Activated CD8-positive, alpha-beta T cell treated with anti-CD3 and anti-CD28 coated beads, Interleukin-2, amount 10 ng/mL, durations not matched to agents 7 days and 5 days (primary cell): ENCODE measurements at regions of chr12 and their contacts with region 1.

Region 1: GRCh38 chr12:55738123-55739024 is 4.5 kb upstream of the GDF11 start:
- DNase-seq: peak; percentile 90
- ATAC-seq: peak; percentile 73
- H3K4me3 Mint-ChIP-seq: peak overlapping the region; percentile 82
- H3K27ac Mint-ChIP-seq: peak overlapping the region; percentile 86
- H3K4me1 Mint-ChIP-seq: peaks cover 43% of the 10 kb centered on the region
- H3K27me3 Mint-ChIP-seq: peaks cover 7% of the 10 kb centered on the region

Region 2: DNA sequence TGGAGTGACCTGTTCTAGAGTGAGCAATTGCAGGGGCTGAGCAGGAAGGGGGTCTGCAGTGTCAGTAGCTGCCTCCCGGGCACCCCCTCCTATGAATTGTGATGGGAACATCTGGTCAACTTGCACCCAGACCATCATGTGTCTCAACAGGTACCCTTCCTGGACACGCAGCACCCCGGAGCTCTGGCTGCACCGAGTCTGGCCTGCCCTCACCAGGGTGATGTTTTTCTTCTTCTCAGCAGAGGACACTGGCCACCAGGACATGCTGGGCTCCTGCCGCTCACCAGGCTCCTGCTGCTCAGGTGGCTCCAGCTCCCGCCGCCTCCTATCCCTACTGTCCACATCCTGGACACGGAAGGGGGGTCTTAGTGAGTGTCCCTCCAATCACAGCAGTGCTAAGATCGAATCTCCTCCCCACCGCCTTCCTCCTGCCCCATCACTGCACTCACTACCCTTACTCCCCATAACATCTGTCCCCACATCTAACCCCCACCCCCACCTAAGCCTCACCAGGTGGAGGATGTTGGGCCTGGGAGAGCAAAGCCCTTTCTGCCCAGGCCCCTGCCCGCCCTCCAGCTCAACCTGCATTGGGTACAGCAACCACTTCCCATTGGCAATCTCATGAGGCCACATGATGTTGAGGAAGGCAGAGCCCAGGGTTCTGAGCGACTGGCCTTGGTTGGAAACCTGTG is 45.6 kb before region 1 on chr12:
- CTCF ChIA-PET with region 1: no interaction called
- POLR2A ChIA-PET with region 1: no interaction called
- DNase-seq: no peak
- ATAC-seq: no peak
- H3K4me3 Mint-ChIP-seq: no peak overlapping the region
- H3K27ac Mint-ChIP-seq: no peak overlapping the region
- H3K4me1 Mint-ChIP-seq: peaks cover 1% of the 10 kb centered on the region
- H3K27me3 Mint-ChIP-seq: no peaks in the 10 kb centered on the region

Region 3: GRCh38 chr12:55705782-55706402 is 32.5 kb before region 1 on chr12:
- CTCF ChIA-PET with region 1: no interaction called
- POLR2A ChIA-PET with region 1: no interaction called
- DNase-seq: no peak
- ATAC-seq: no peak
- H3K4me3 Mint-ChIP-seq: no peak overlapping the region
- H3K27ac Mint-ChIP-seq: no peak overlapping the region
- H3K4me1 Mint-ChIP-seq: peaks cover 20% of the 10 kb centered on the region
- H3K27me3 Mint-ChIP-seq: peaks cover 39% of the 10 kb centered on the region

Region 4: GRCh38 chr12:55771736-55772135 is 33.4 kb after region 1 on chr12:
- CTCF ChIA-PET with region 1: interaction called, 15 read pairs
- POLR2A ChIA-PET with region 1: no interaction called
- DNase-seq: no peak
- ATAC-seq: no peak
- H3K4me3 Mint-ChIP-seq: no peak overlapping the region
- H3K27ac Mint-ChIP-seq: no peak overlapping the region
- H3K4me1 Mint-ChIP-seq: peaks cover 3% of the 10 kb centered on the region
- H3K27me3 Mint-ChIP-seq: no peaks in the 10 kb centered on the region

Region 5: DNA sequence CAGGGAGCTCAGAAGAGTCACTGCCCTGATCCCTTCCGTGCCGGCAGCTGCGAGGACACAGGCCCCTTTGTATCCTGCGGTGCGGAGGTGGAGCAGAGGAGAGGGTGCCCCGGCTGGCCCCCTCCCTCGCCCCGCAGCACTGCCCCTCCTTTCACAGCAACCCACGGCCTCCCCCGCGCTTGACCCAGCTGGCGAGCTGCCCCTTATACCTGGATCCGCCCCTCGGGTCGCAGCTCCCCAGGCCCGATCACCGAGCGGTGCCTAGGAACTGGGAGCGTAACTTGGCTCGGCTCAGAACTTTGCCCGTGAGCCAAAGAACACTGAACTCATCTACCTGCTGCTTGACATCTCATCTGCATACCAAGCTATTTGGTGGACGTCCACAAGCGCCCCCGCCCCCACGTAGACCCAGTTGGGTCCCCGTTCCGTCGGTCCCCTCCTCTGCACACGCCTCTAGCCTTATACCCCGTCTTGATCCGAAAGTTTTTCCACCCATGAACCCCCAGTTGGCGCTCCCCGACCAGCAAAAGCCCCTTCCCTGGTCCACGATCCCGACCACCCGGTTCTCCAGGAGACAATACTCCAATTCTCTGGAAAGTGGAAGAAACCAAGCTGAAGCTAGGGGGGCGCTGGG is 91.7 kb after region 1 on chr12:
- CTCF ChIA-PET with region 1: interaction called, 16 read pairs
- POLR2A ChIA-PET with region 1: interaction called, 4 read pairs
- DNase-seq: peak; percentile 55
- ATAC-seq: peak; percentile 35
- H3K4me3 Mint-ChIP-seq: peak overlapping the region; percentile 99
- H3K27ac Mint-ChIP-seq: peak overlapping the region; percentile 97
- H3K4me1 Mint-ChIP-seq: peaks cover 41% of the 10 kb centered on the region
- H3K27me3 Mint-ChIP-seq: no peaks in the 10 kb centered on the region

Region 6: DNA sequence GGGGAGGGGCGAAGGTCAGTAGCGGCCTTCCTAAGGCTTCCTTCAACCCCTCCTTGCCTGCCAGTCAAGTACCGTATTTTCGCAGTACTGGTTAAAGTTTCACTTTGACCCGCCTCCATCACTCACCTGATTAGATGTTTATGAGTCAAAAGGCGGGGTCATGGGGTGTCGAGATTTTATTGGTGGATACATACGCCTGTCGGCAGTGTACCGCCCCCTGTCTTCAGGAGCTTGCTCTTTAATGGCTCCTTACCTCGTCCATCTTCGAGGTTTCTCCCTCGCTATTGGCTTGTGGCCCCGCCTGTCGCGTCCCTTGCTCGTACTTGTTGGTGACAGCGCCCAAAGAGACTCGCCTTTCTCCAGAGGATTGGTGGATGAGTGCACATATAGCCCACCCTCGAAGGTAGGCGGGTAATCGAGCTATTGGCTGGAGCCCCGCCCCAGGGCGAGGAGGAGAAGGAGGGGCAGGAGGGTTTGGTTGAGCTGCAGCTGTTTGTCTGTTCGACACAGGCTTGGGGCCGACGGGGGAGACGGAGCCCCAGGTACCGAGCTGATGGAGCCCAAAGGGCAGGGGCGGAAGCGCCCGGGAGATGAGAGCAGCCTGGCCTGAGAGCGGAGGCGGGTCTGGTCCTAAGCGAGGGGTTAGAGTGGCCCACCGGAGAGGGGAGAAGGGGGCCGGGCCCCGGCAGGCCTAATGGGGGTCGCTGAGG is 235.4 kb after region 1 on chr12 and contains the start of gene RAB5B:
- CTCF ChIA-PET with region 1: interaction called, 21 read pairs
- POLR2A ChIA-PET with region 1: no interaction called
- DNase-seq: peak; percentile 100
- ATAC-seq: peak; percentile 96
- H3K4me3 Mint-ChIP-seq: no peak within 1 kb of the TSS
- H3K27ac Mint-ChIP-seq: no peak within 1 kb of the TSS
- H3K4me1 Mint-ChIP-seq: peaks cover 17% of the 10 kb centered on the region
- H3K27me3 Mint-ChIP-seq: no peaks in the 10 kb centered on the region
- total RNA-seq, gene RAB5B: 51.9 to 52.9 TPM

Region 7: DNA sequence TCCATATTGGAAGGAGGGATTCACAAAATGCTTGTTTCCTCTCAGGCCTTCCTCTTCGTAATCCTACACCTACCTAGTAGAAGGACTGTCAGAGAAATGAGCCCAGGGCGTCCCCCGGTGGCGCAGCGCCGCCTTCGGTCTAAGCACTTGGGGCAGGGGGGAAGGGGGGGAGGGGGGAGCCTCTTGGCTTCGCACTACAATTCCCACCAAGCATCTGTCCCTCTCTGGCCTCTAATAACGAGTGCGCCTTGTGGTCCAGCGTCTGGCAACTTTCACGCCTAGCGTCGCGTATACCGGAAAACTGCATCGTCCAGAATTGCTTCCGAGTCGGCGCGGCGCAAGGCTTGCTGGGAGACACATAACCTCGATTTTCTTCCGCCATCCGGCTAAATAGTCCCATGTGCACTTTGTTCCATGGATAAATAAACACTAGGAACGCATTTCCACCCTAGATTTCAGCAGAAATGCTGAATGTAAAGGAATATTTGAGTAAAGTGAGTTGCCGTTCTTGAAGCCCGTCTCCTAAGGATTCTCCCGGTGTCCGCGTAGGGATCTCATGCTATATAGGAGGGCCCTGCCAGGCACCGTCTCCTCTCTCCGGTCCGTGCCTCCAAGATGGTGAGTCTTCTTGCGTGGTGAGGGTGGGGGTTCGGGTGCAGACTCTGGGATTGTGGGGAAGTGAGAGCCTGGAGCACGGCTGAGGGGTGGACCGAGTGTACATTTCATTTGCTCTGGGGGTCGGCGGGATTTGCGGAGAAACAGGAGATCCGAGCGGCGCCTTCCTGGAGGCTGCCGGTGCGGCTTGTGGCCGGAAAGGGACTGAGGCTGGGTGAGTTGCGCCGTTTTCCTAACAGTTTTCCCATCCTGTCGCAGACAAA is 303.4 kb after region 1 on chr12 and contains the start of gene RPS26:
- CTCF ChIA-PET with region 1: interaction called, 20 read pairs
- POLR2A ChIA-PET with region 1: interaction called, 7 read pairs
- DNase-seq: peak; percentile 97
- ATAC-seq: peak; percentile 91
- H3K4me3 Mint-ChIP-seq: peak within 1 kb of the TSS; percentile 96
- H3K27ac Mint-ChIP-seq: peak within 1 kb of the TSS; percentile 96
- H3K4me1 Mint-ChIP-seq: peaks cover 50% of the 10 kb centered on the region
- H3K27me3 Mint-ChIP-seq: no peaks in the 10 kb centered on the region
- total RNA-seq, gene RPS26: 25.2 to 27.2 TPM

Region 8: DNA sequence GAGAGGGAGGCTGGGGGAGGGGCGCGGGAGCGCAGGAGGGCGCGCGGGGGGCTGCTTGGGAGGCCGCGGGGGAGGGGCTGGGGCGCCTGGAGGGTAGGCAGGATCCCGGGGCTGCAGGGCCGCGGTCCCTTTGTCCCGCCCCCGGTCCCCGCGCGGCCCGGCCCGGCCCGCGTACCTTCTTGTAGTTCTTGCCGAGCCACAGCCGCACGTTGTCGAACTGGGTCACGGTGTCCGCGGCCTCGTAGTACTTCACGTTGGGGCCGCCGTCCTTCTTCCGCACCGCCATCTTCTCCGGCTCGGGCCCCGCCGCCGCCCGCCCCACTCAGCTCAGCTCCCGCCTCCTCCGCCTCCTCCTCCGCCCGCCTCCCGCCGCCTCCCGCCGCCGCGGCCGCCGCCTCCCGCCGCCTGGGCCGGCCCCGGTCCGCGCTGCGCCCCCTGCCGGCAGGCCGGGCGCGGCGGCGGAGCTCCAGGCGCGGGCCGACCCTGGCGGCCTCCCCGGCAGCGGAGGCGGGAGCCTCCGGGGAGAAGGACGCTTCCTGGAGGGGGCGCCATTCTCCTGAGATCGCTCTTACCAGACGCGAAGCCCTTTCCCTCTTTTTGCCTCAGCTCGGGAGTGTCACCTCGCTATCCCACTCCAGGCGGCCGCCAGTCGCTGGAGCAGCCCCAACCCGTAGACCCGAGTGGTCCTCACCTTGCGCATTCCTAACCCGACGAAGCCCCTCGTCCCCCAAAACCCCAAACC is 451.0 kb after region 1 on chr12 and contains the start of gene SMARCC2:
- CTCF ChIA-PET with region 1: interaction called, 25 read pairs
- POLR2A ChIA-PET with region 1: no interaction called
- DNase-seq: peak; percentile 90
- ATAC-seq: peak; percentile 90
- H3K4me3 Mint-ChIP-seq: peak within 1 kb of the TSS; percentile 93
- H3K27ac Mint-ChIP-seq: peak within 1 kb of the TSS; percentile 93
- H3K4me1 Mint-ChIP-seq: peaks cover 52% of the 10 kb centered on the region
- H3K27me3 Mint-ChIP-seq: no peaks in the 10 kb centered on the region
- total RNA-seq, gene SMARCC2: 144 to 154 TPM